PC-9 (cell line): ENCODE measurements at regions of chr15 and their contacts with region 1.

Region 1: DNA sequence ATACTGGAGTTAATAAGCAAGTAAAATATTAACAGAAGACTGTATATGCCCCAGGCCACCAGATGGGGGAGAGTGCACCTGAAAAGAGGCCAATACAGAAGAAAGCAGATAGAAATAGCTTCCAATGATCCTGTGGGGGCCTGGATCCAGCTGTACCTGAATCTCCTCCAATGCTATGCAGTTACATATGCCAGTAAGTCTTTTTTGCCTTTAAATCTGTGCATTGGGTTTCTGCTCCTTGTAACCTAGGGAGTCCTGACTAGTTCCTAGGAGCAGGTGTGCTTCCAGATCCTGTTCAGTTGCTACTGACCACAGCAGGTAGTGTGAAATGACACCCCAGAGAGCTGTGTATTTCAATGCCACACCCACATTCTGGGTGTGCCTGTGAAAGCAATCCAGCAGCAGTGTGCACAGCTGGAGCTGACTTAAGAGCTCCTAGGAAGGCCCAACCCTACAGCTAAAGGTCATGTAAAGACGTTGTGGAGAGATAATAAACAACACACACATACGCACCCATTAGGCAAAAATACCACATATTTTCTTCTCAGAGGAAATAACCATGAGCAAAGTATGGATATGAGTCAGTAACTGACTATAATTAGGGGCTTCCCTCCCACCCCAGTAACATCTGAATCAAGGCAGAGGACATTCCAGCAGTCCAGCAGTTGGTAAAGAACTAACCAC is 62.2 kb upstream of the AKAP13 start:
- DNase-seq: peak; percentile 43 to 82
- H3K4me3 ChIP-seq: no peak overlapping the region
- H3K27ac ChIP-seq: no peak overlapping the region; the same call in 1 of the 2 replicates
- H3K4me1 ChIP-seq: peaks cover 13% of the 10 kb centered on the region
- H3K27me3 ChIP-seq: no peaks in the 10 kb centered on the region
- CTCF ChIP-seq: peak; percentile 62

Region 2: GRCh38 chr15:85515212-85515611 is 197.0 kb after region 1 on chr15:
- CTCF ChIA-PET with region 1: interaction called, 10 read pairs
- POLR2A ChIA-PET with region 1: no interaction called
- intact Hi-C with region 1: no loop called
- DNase-seq: no peak
- H3K4me3 ChIP-seq: no peak overlapping the region
- H3K27ac ChIP-seq: no peak overlapping the region
- H3K4me1 ChIP-seq: no peaks in the 10 kb centered on the region
- H3K27me3 ChIP-seq: no peaks in the 10 kb centered on the region
- CTCF ChIP-seq: no peak